B cell (primary cell): ENCODE measurements at regions of chr17 and their contacts with region 1.

Region 1: GRCh38 chr17:76408052-76408849 is 23.8 kb downstream of the SPHK1 start:
- DNase-seq: peak; percentile 89
- ATAC-seq: peak; percentile 73
- H3K4me3 ChIP-seq: no peak overlapping the region
- H3K4me3 Mint-ChIP-seq: peak overlapping the region; percentile 26
- H3K27ac ChIP-seq: peak overlapping the region in 1 of 2 donors; percentile 43
- H3K27ac Mint-ChIP-seq: peak overlapping the region; percentile 50
- H3K4me1 ChIP-seq: peaks cover 37 to 41% of the 10 kb centered on the region in 2 donors
- H3K4me1 Mint-ChIP-seq: peaks cover 49% of the 10 kb centered on the region
- H3K27me3 ChIP-seq: no peaks in the 10 kb centered on the region
- H3K27me3 Mint-ChIP-seq: no peaks in the 10 kb centered on the region
- CTCF ChIP-seq: peak; percentile 92

Region 2: DNA sequence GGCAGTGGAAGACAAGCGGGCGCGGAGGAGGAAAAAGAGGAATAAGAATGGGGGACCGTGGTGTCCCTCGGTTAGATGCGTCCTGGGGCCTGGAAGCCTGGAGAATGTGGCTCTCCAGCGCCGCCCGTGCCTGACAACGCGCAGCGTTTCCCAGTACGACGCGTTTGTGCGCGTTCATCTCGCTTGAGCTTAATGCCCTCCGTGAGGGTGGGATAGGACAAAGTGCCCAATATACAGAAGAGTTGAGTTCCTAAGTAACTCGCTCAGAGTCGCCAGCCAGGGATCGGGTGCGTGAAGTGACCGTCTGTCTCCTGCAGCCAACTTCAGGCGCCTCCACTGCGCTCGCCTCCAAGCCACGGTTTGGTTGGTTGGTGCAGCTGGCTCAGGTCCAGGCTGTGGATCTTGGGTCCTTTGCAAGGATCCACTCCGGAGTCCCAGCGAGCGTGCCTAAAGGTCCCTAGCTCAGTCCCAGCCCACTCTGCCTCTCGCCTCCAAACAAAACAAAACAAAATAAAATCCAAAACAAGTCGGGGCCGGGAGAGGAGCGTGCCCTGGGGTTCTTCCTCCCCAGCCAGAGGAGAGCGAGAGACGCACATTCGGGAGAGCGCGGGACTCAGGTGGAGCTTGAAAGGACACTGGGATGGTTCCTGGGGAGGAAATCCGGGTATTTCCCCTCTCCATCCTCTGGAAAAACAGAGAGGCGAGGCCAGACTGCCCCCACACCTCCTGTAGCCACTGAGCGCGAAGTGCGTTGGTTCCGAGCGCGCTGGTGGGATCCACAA is 332.7 kb before region 1 on chr17:
- CTCF ChIA-PET with region 1: no interaction called
- POLR2A ChIA-PET with region 1: no interaction called
- intact Hi-C with region 1: no loop called
- DNase-seq: no peak
- ATAC-seq: no peak
- H3K4me3 ChIP-seq: peak overlapping the region in 2 of 5 experiments; percentile 8 to 18
- H3K4me3 Mint-ChIP-seq: peak overlapping the region; percentile 85
- H3K27ac ChIP-seq: no peak overlapping the region
- H3K27ac Mint-ChIP-seq: peak overlapping the region; percentile 59
- H3K4me1 ChIP-seq: peaks cover 64 to 69% of the 10 kb centered on the region in 2 donors
- H3K4me1 Mint-ChIP-seq: peaks cover 63% of the 10 kb centered on the region
- H3K27me3 ChIP-seq: peaks cover 0 to 64% (median 44%) of the 10 kb centered on the region in 4 experiments
- H3K27me3 Mint-ChIP-seq: peaks cover 31% of the 10 kb centered on the region
- CTCF ChIP-seq: no peak

Region 3: DNA sequence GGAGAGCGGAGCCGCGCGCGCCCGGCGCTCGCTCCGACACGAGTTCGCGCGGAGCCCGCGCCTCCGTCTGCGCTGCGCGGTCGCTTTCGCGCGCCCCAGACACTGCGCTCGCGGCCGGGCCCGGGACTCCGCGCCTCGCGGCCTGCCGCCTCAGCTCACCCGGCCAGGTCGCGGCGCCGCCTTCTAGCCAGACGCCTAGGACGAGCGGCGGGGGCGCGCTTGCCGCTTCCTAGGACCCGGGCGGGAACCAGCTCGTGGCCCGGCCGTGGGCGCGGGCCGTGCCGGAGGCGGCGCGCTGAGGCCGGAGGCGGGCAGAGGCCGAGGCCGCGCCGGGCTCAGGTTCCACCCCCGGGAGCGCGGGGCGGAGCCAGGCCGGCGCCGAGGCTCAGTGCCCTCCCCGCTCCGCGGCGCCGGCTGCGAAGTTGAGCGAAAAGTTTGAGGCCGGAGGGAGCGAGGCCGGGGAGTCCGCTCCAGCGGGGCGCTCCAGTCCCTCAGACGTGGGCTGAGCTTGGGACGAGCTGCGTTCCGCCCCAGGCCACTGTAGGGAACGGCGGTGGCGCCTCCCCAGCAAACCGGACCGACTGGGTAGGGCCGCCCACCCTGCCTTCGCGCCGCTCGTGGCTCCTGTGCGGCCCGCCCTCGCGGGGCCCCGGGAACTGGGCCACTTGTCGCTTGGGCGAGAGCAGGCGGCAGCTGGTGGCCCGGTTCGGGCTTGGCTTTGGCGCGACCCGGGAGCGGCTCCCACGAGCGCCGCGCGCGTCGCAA is 23.8 kb before region 1 on chr17 and contains the start of gene SPHK1:
- CTCF ChIA-PET with region 1: interaction called, 18 read pairs
- POLR2A ChIA-PET with region 1: no interaction called
- intact Hi-C with region 1: no loop called
- DNase-seq: peak; percentile 81
- ATAC-seq: peak; percentile 76
- H3K4me3 ChIP-seq: peak within 1 kb of the TSS; percentile 40 to 71 (median 58)
- H3K4me3 Mint-ChIP-seq: peak within 1 kb of the TSS; percentile 84
- H3K27ac ChIP-seq: no peak within 1 kb of the TSS
- H3K27ac Mint-ChIP-seq: peak within 1 kb of the TSS; percentile 78
- H3K4me1 ChIP-seq: peaks cover 26 to 29% of the 10 kb centered on the region in 2 donors
- H3K4me1 Mint-ChIP-seq: peaks cover 17% of the 10 kb centered on the region
- H3K27me3 ChIP-seq: peaks cover 0 to 24% (median 8%) of the 10 kb centered on the region in 4 experiments
- H3K27me3 Mint-ChIP-seq: peaks cover 7% of the 10 kb centered on the region
- CTCF ChIP-seq: no peak
- total RNA-seq, gene SPHK1: 2.2 and 2.4 TPM in 2 replicates

Region 4: GRCh38 chr17:76421044-76421407 is 12.8 kb after region 1 on chr17:
- CTCF ChIA-PET with region 1: interaction called, 69 read pairs
- POLR2A ChIA-PET with region 1: interaction called, 6 read pairs
- intact Hi-C with region 1: loop called (anchors 1 kb)
- DNase-seq: no peak
- ATAC-seq: no peak
- H3K4me3 ChIP-seq: no peak overlapping the region
- H3K4me3 Mint-ChIP-seq: peak overlapping the region; percentile 21
- H3K27ac ChIP-seq: peak overlapping the region in 1 of 2 donors; percentile 32
- H3K27ac Mint-ChIP-seq: peak overlapping the region; percentile 66
- H3K4me1 ChIP-seq: peaks cover 66 to 75% of the 10 kb centered on the region in 2 donors
- H3K4me1 Mint-ChIP-seq: peaks cover 73% of the 10 kb centered on the region
- H3K27me3 ChIP-seq: no peaks in the 10 kb centered on the region
- H3K27me3 Mint-ChIP-seq: no peaks in the 10 kb centered on the region
- CTCF ChIP-seq: no peak

Region 5: DNA sequence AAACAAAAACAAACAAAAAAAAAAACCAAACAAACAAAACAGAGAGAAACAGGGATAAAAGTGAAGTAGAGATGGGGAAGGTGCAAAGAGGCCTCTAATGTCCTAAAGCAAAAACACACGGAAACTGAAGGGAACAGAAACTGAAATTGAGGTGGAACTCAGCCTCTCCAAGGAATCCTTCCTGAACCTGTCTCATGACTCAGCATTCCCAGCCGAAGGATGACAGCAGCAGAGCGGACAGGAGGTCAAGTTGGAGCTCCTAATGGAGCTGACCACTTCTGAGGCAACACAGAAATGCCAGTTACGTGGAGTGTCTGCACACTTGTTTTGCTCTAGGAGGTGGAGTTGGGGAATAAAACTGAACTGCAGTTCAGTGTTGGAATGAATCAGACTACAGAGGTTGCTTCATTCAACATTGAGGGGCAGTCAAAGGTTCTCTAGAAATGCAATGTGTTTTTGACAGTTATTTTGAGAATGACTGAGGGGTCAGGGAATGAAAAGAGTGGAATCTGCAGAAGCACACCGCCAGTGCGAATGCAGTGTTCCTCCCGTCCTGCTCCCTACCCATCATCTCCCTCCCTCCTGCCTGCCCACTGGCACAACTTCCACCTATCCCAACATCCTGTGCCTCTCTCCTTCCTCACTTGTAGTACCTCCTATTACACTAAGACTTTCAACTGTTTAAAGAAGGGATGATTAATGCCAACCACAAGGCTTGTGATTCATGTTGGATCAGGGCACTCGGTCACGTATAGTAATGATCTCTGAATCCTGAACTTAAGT is 38.4 kb after region 1 on chr17:
- CTCF ChIA-PET with region 1: interaction called, 265 read pairs
- POLR2A ChIA-PET with region 1: interaction called, 11 read pairs
- intact Hi-C with region 1: no loop called
- DNase-seq: no peak
- ATAC-seq: no peak
- H3K4me3 ChIP-seq: no peak overlapping the region
- H3K4me3 Mint-ChIP-seq: no peak overlapping the region
- H3K27ac ChIP-seq: no peak overlapping the region
- H3K27ac Mint-ChIP-seq: no peak overlapping the region
- H3K4me1 ChIP-seq: peaks cover 60 to 71% of the 10 kb centered on the region in 2 donors
- H3K4me1 Mint-ChIP-seq: peaks cover 86% of the 10 kb centered on the region
- H3K27me3 ChIP-seq: no peaks in the 10 kb centered on the region
- H3K27me3 Mint-ChIP-seq: no peaks in the 10 kb centered on the region
- CTCF ChIP-seq: no peak

Region 6: GRCh38 chr17:76458580-76459490 is 50.6 kb after region 1 on chr17:
- CTCF ChIA-PET with region 1: interaction called, 265 read pairs
- POLR2A ChIA-PET with region 1: interaction called, 4 read pairs
- intact Hi-C with region 1: loop called (anchors 1 kb)
- DNase-seq: peak; percentile 68
- ATAC-seq: peak; percentile 80
- H3K4me3 ChIP-seq: no peak overlapping the region
- H3K4me3 Mint-ChIP-seq: no peak overlapping the region
- H3K27ac ChIP-seq: no peak overlapping the region
- H3K27ac Mint-ChIP-seq: no peak overlapping the region
- H3K4me1 ChIP-seq: no peaks in the 10 kb centered on the region
- H3K4me1 Mint-ChIP-seq: no peaks in the 10 kb centered on the region
- H3K27me3 ChIP-seq: peaks cover 0 to 3% (median 0%) of the 10 kb centered on the region in 4 experiments
- H3K27me3 Mint-ChIP-seq: no peaks in the 10 kb centered on the region
- CTCF ChIP-seq: peak; percentile 21

Region 7: GRCh38 chr17:76501018-76501826 is 93.0 kb after region 1 on chr17 and contains the start of gene RHBDF2:
- CTCF ChIA-PET with region 1: interaction called, 16 read pairs
- POLR2A ChIA-PET with region 1: interaction called, 3 read pairs
- intact Hi-C with region 1: loop called (anchors 1 kb)
- DNase-seq: peak; percentile 95
- ATAC-seq: peak; percentile 85
- H3K4me3 ChIP-seq: peak within 1 kb of the TSS; percentile 46 to 97 (median 95)
- H3K4me3 Mint-ChIP-seq: peak within 1 kb of the TSS; percentile 97
- H3K27ac ChIP-seq: peak within 1 kb of the TSS; percentile 78 to 94
- H3K27ac Mint-ChIP-seq: peak within 1 kb of the TSS; percentile 99
- H3K4me1 ChIP-seq: peaks cover 38 to 63% of the 10 kb centered on the region in 2 donors
- H3K4me1 Mint-ChIP-seq: peaks cover 56% of the 10 kb centered on the region
- H3K27me3 ChIP-seq: no peaks in the 10 kb centered on the region
- H3K27me3 Mint-ChIP-seq: no peaks in the 10 kb centered on the region
- CTCF ChIP-seq: no peak
- total RNA-seq, gene RHBDF2: 482 and 509 TPM in 2 replicates

Region 8: GRCh38 chr17:76547184-76547641 is 139.0 kb after region 1 on chr17:
- CTCF ChIA-PET with region 1: interaction called, 5 read pairs
- POLR2A ChIA-PET with region 1: no interaction called
- intact Hi-C with region 1: loop called (anchors 1 kb)
- DNase-seq: peak; percentile 78
- ATAC-seq: peak; percentile 90
- H3K4me3 ChIP-seq: no peak overlapping the region
- H3K4me3 Mint-ChIP-seq: no peak overlapping the region
- H3K27ac ChIP-seq: no peak overlapping the region
- H3K27ac Mint-ChIP-seq: no peak overlapping the region
- H3K4me1 ChIP-seq: peaks cover 4 to 8% of the 10 kb centered on the region in 2 donors
- H3K4me1 Mint-ChIP-seq: peaks cover 7% of the 10 kb centered on the region
- H3K27me3 ChIP-seq: peaks cover 0 to 7% (median 3%) of the 10 kb centered on the region in 4 experiments
- H3K27me3 Mint-ChIP-seq: peaks cover 17% of the 10 kb centered on the region
- CTCF ChIP-seq: peak; percentile 66